ENCODE measurements at regions of chr19 and their contacts with region 1.

Region 1: DNA sequence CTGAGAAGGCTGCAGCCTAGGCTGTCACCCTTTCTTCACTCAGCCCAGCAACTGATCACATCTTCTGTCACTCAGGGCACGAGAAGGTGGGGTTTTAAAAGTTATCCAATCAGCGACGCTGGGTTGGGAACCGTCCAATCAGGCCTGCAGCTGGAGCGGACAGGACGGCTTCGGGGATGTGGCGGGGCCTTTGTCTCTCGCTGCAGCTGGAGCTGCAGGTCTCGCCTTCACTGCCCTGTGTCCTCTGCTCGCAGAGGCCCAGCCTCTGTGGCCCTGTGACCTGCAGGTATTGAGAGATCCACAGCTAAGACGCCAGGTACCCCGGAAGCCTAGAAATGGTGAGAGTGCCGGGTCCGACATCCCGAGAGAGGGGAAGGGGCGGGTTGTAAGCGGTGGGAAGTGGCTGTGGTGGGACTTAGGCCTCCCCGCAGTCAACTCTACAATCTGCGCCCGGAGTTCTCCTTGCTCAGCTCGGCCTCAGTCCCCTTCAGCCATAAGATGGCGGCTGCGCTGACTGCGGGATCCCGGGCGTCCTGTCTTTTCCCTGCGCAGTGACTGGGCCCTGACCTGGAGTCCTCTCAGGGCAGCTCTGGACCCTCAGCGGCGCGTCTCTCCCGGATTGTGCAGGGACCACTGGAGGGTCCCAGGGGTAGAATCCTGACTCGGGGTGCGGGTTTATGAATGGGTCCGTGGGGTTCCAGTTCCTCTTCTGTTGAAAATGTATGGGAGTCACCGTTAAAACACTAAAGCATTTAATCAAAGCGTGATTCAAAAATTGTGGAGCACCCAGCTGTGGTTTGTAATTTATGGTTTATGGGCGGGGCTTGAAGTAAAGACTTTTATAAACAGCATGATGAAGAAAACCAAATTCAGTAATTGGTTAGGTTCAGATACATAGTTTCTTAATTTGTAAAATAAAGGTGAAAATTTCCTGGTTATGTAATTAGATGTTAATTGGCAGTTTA is at the start of gene ZNF714:
- DNase-seq: peak; percentile 91
- H3K4me3 Mint-ChIP-seq: peak within 1 kb of the TSS; percentile 100
- H3K27ac Mint-ChIP-seq: peak within 1 kb of the TSS; percentile 94
- H3K4me1 Mint-ChIP-seq: peaks cover 31% of the 10 kb centered on the region
- H3K27me3 Mint-ChIP-seq: no peaks in the 10 kb centered on the region
- total RNA-seq, gene ZNF714: 17.9 to 18.0 TPM

Region 2: GRCh38 chr19:21028969-21029268 is 53.4 kb before region 1 on chr19:
- CTCF ChIA-PET with region 1: no interaction called
- POLR2A ChIA-PET with region 1: interaction called, 4 read pairs
- intact Hi-C with region 1: loop called (anchors 1 kb)
- DNase-seq: no peak
- H3K4me3 Mint-ChIP-seq: no peak overlapping the region
- H3K27ac Mint-ChIP-seq: peak overlapping the region; percentile 49
- H3K4me1 Mint-ChIP-seq: peaks cover 65% of the 10 kb centered on the region
- H3K27me3 Mint-ChIP-seq: no peaks in the 10 kb centered on the region

Region 3: DNA sequence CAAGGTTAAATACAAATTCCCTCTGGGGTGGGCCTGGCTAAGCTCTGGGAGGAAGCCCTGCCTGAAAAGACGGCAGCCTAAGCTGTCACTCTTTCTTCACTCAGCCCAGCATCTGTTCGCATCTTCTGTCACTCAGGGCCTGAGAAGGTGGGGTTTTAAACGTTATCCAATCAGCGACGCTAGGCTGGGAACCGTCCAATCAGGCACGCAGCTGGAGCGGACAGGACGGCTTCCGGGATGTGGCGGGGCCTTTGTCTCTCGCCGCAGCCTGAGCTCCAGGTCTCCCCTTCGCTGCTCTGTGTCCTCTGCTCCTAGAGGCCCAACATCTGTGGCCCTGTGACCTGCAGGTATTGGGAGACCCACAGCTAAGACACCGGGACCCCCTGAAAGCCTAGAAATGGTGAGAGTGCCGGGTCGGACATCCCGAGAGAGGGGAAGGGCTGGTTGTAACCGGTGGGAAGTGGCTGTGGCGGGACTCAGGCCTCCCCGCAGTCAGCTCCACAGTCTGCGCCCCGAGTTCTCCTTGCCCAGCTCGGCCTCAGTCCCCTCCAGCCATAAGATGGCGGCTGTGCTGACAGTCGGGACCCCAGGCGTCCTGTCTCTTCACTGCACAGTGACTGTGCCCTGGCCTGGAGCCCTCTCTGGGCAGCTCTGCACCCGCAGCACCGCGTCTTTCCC is 59.6 kb after region 1 on chr19 and contains the start of gene ZNF431:
- CTCF ChIA-PET with region 1: no interaction called
- POLR2A ChIA-PET with region 1: interaction called, 6 read pairs
- intact Hi-C with region 1: loop called (anchors 1 kb)
- DNase-seq: peak; percentile 94
- H3K4me3 Mint-ChIP-seq: peak within 1 kb of the TSS; percentile 96
- H3K27ac Mint-ChIP-seq: peak within 1 kb of the TSS; percentile 90
- H3K4me1 Mint-ChIP-seq: peaks cover 41% of the 10 kb centered on the region
- H3K27me3 Mint-ChIP-seq: no peaks in the 10 kb centered on the region
- total RNA-seq, gene ZNF431: 16.9 to 17.1 TPM

Measured in activated CD4-positive, alpha-beta memory T cell treated with anti-CD3 and anti-CD28 coated beads for 36 hours (primary cell).